ENCODE measurements at regions of chr12 and their contacts with region 1.

Region 1: DNA sequence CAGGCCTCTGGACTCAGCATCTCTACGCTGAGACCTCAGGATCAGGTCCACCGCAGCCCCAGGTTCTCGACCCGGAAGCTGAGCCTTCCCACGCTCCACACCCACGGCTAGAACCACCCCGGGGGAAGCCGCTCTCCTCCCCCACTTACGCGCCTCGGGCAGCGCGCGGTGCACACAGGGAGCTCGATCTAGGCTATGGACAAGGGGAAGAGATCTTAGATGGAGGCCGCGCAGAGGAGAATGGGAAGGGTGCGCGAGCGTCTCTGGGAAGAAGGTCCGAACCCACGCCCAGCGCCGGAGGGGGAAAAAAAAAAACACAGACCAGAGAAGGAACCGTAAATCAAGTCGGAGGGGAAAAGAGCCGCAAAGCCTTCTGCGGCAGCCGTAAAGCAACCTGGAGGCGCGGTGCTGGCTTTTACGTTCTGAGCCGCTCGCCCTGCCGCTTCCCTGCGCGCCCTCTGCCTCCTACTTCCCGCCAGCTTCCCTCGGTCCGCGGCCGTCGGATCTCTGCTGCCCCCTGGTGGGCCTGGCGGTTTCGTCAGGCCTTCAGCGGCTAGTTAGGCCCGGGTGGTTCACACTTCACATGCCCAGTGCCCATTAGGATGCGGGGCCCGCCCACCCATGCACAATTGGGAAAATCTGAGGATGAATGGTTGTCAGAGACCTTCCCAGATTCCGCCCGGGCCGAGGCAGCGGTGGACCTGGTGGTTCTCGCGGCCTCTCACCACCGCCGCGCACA is at the start of gene RAD52:
- DNase-seq: peak; percentile 92
- H3K4me3 ChIP-seq: peak within 1 kb of the TSS; percentile 90
- CTCF ChIP-seq: peak; percentile 99

Region 2: GRCh38 chr12:569803-570434 is 379.7 kb before region 1 on chr12:
- CTCF ChIA-PET with region 1: interaction called, 20 read pairs
- POLR2A ChIA-PET with region 1: no interaction called
- DNase-seq: no peak
- H3K4me3 ChIP-seq: peak overlapping the region; percentile 63
- CTCF ChIP-seq: peak; percentile 99

Region 3: DNA sequence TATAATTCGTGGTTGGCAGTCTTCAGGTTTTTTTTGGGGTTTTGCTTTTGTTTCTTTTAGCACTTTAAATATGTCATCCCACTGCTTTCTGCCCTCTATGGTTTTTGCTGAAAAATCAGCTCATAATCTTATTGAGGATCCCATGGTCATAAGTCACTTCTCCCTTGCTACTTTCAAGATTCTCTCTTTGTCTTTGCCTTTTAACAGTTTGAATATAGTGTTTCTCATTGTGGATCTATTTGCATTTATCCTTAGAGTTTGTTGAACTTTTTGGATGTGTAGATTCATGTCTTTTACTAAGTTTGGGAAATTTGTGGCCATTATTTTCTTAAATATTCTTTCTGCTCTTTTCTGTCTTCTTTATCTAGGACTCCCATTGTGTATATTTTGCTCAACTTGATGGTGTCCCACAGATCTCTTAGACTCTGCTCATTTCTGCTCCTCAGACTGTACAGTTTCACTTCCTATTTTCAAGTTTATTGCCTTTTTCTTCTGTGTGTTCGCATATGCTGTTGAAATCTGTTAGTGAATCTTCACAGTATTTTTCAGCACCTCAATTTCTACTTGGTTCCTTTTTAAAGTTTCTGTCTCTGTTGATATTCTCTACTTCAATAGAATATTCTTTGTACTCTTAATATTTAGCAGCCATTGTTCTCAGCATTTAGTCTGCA is 126.5 kb before region 1 on chr12:
- CTCF ChIA-PET with region 1: interaction called, 22 read pairs
- POLR2A ChIA-PET with region 1: no interaction called
- DNase-seq: no peak
- H3K4me3 ChIP-seq: no peak overlapping the region
- CTCF ChIP-seq: no peak

Region 4: GRCh38 chr12:938810-939209 is 10.8 kb before region 1 on chr12:
- CTCF ChIA-PET with region 1: interaction called, 15 read pairs
- POLR2A ChIA-PET with region 1: no interaction called
- DNase-seq: no peak
- H3K4me3 ChIP-seq: no peak overlapping the region
- CTCF ChIP-seq: no peak

Region 5: DNA sequence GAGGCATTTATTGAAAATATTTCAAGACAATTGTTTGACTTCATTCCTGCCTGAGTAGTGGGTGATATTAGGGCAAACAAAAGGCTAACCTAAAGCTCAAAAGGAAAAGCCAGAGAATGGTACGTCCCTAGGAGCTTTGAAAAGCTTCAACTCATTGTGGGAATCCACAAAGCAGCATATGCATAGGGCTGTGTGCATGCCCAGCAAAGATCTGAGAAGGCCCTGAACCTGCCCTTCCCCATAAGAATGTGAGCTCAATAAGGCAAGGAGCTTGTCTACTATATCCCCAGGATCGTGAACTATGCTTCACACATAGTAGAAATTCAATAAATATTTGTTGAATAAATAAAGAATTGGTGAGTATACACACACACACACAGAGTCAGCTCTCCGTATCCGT is 18.9 kb after region 1 on chr12:
- CTCF ChIA-PET with region 1: interaction called, 22 read pairs
- POLR2A ChIA-PET with region 1: interaction called, 3 read pairs
- DNase-seq: no peak
- H3K4me3 ChIP-seq: no peak overlapping the region
- CTCF ChIP-seq: no peak

Region 6: GRCh38 chr12:990661-991349 is 41.2 kb after region 1 on chr12 and contains the start of gene ERC1:
- CTCF ChIA-PET with region 1: interaction called, 10 read pairs
- POLR2A ChIA-PET with region 1: interaction called, 4 read pairs
- DNase-seq: peak; percentile 41
- H3K4me3 ChIP-seq: peak within 1 kb of the TSS; percentile 83
- CTCF ChIP-seq: peak; percentile 12

Region 7: DNA sequence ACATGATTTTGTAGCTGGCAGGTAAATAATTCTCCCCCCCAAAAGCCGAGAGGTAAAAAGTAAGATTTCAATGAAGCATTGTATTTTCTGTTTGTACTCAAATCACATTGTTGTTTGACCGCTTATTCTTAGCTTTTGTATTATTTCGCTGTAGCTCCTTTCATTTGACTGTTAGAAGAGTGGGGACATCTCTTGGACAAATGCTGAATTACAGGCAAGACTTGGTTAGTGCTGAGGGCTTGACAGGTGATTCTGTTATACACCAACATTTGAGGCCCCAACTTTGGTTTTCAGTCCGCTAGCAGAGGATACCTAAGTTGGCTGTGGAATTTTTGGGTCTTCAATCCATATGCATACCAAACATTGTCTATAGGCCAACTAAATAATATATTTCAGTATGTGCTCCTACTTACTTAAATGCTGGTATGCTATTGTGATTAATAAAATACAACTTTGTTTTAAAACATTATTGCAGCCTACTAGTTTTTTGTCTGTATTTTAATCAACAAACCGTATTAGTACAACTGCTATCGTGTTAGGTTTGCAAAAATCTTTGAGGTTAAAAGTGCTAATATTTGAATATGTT is 143.6 kb after region 1 on chr12:
- CTCF ChIA-PET with region 1: interaction called, 22 read pairs
- POLR2A ChIA-PET with region 1: interaction called, 3 read pairs
- DNase-seq: no peak
- H3K4me3 ChIP-seq: no peak overlapping the region
- CTCF ChIP-seq: peak; percentile 68

Measured in AG04449 (cell line).